CD4-positive, alpha-beta T cell (primary cell): ENCODE measurements at regions of chr12 and their contacts with region 1.

Region 1: GRCh38 chr12:131132118-131132892 is 178.6 kb downstream of the ADGRD1 start:
- DNase-seq: peak; percentile 58 to 78 (median 66)
- ATAC-seq: peak; percentile 71
- H3K4me3 ChIP-seq: no peak overlapping the region
- H3K4me3 Mint-ChIP-seq: no peak overlapping the region
- H3K27ac ChIP-seq: no peak overlapping the region
- H3K27ac Mint-ChIP-seq: no peak overlapping the region
- H3K4me1 ChIP-seq: peaks cover 6% of the 10 kb centered on the region
- H3K4me1 Mint-ChIP-seq: no peaks in the 10 kb centered on the region
- H3K27me3 ChIP-seq: no peaks in the 10 kb centered on the region
- H3K27me3 Mint-ChIP-seq: no peaks in the 10 kb centered on the region
- CTCF ChIP-seq: peak; percentile 80

Region 2: DNA sequence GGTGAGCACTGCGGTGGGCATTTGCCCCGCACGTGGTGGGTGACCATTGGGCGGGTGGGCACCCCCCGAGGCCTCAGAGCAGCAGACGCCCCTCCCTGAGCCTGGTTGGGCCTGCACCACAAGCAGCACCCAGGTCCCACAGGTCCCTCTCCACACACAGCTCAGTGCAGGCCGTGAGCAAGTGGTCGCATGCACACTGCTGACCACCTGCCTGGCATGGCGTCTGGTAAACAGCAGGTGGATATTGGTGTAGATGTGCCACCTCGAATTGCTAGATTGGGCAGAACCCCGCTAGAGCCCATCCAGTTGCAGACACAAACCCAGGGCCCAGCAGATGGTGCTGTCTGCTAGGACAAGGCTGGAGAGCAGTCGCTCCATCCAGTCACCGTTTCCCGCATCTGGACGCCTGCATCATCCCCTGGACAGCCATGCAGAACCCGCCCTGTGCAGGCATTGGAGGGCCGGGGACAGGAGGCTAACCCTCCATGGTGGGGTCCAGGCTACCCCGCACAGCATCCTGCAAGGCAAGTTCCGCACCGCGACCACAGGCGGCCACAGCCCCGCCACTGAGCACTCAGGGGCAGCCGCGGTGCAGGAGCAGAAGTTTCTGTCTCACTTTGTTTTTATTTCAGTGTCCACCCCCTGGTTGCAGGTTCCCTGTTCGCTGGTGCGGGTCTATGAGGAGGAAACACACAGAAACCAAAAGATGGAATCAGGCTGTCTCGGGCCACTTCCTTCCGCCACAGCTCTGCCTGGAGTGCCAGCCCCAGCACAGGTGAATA is 370.6 kb before region 1 on chr12:
- CTCF ChIA-PET with region 1: no interaction called
- POLR2A ChIA-PET with region 1: no interaction called
- intact Hi-C with region 1: loop called (anchors 1 to 5 kb)
- DNase-seq: peak; percentile 26 to 73 (median 51)
- ATAC-seq: peak; percentile 69
- H3K4me3 ChIP-seq: peak overlapping the region; percentile 47
- H3K4me3 Mint-ChIP-seq: peak overlapping the region; percentile 72
- H3K27ac ChIP-seq: no peak overlapping the region
- H3K27ac Mint-ChIP-seq: no peak overlapping the region
- H3K4me1 ChIP-seq: peaks cover 29% of the 10 kb centered on the region
- H3K4me1 Mint-ChIP-seq: peaks cover 5% of the 10 kb centered on the region
- H3K27me3 ChIP-seq: peaks cover 6 to 13% of the 10 kb centered on the region in 2 experiments
- H3K27me3 Mint-ChIP-seq: peaks cover 20% of the 10 kb centered on the region
- CTCF ChIP-seq: peak; percentile 58

Region 3: GRCh38 chr12:130826149-130826801 is 306.0 kb before region 1 on chr12:
- CTCF ChIA-PET with region 1: interaction called, 11 read pairs
- POLR2A ChIA-PET with region 1: no interaction called
- intact Hi-C with region 1: loop called (anchors 1 kb)
- DNase-seq: peak; percentile 57 to 85 (median 68)
- ATAC-seq: peak; percentile 100
- H3K4me3 ChIP-seq: no peak overlapping the region
- H3K4me3 Mint-ChIP-seq: no peak overlapping the region
- H3K27ac ChIP-seq: no peak overlapping the region
- H3K27ac Mint-ChIP-seq: no peak overlapping the region
- H3K4me1 ChIP-seq: peaks cover 7% of the 10 kb centered on the region
- H3K4me1 Mint-ChIP-seq: peaks cover 11% of the 10 kb centered on the region
- H3K27me3 ChIP-seq: no peaks in the 10 kb centered on the region
- H3K27me3 Mint-ChIP-seq: no peaks in the 10 kb centered on the region
- CTCF ChIP-seq: peak; percentile 90

Region 4: DNA sequence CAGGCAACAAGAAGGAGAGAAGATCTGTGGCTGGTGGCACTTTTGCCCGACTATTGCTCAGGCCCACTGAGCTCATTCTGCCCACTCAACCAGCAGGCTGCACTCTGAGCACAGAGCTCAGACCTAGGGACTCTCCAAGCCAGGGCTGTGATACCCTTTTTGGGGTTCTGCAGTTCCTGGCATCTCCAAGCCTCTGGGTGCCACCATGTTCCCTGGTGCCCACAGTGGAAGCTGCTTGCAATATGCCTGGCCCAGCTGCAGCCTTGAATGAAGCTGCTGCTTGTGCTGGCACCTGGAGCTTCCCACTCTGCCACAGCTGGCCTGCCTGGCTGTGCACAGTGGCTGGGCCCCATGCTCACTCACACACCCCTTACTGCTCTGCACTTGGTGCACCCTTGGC is 57.5 kb after region 1 on chr12:
- CTCF ChIA-PET with region 1: no interaction called
- POLR2A ChIA-PET with region 1: no interaction called
- intact Hi-C with region 1: no loop called
- DNase-seq: no peak
- ATAC-seq: no peak
- H3K4me3 ChIP-seq: no peak overlapping the region
- H3K4me3 Mint-ChIP-seq: no peak overlapping the region
- H3K27ac ChIP-seq: no peak overlapping the region
- H3K27ac Mint-ChIP-seq: no peak overlapping the region
- H3K4me1 ChIP-seq: no peaks in the 10 kb centered on the region
- H3K4me1 Mint-ChIP-seq: no peaks in the 10 kb centered on the region
- H3K27me3 ChIP-seq: peaks cover 0 to 2% of the 10 kb centered on the region in 2 experiments
- H3K27me3 Mint-ChIP-seq: peaks cover 3% of the 10 kb centered on the region
- CTCF ChIP-seq: no peak

Region 5: GRCh38 chr12:131204416-131205274 is 72.3 kb after region 1 on chr12:
- CTCF ChIA-PET with region 1: no interaction called
- POLR2A ChIA-PET with region 1: no interaction called
- intact Hi-C with region 1: no loop called
- DNase-seq: no peak
- ATAC-seq: no peak
- H3K4me3 ChIP-seq: no peak overlapping the region
- H3K4me3 Mint-ChIP-seq: no peak overlapping the region
- H3K27ac ChIP-seq: no peak overlapping the region
- H3K27ac Mint-ChIP-seq: no peak overlapping the region
- H3K4me1 ChIP-seq: peaks cover 5% of the 10 kb centered on the region
- H3K4me1 Mint-ChIP-seq: peaks cover 3% of the 10 kb centered on the region
- H3K27me3 ChIP-seq: no peaks in the 10 kb centered on the region
- H3K27me3 Mint-ChIP-seq: no peaks in the 10 kb centered on the region
- CTCF ChIP-seq: no peak